PC-3 (cell line): ENCODE measurements at regions of chr21 and their contacts with region 1.

Region 1: DNA sequence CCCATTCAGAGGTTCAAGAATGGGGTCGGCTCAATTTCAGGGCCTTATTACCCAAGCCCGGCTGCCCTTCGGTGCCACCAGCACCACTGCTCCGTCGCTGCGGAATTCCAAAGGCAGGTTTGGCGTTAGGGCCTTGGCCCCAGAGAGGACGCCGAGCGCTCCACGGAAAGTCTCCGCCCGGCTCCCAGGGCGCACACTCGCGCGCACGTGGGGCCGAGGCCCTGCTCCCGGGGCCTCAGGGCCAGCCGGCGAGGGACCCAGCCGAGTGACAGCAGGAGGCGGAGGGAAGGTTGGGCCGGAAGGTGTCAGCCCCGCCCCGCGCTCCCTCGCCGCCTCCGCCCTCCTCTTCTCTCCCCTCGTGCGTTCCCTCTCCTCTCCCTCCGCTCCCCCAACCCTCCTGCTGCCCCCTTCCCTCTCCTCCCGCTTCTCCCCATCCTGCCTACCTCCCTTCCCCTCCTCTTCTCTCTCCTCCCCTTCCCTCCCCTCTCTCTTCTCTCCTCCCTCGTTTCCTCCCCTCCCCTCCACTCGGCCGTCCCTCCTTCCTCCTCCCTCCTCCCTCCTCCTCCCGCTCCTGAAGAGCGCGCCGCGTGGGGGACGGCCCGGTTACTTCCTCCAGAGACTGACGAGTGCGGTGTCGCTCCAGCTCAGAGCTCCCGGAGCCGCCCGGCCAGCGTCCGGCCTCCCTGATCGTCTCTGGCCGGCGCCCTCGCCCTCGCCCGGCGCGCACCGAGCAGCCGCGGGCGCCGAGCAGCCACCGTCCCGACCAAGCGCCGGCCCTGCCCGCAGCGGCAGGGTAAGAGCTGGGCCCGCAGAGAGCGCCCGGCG is at the start of gene ETS2:
- DNase-seq: peak; percentile 95
- ATAC-seq: peak; percentile 57
- H3K4me3 ChIP-seq: peak within 1 kb of the TSS; percentile 88
- H3K27ac ChIP-seq: peak within 1 kb of the TSS; percentile 98
- H3K4me1 ChIP-seq: peaks cover 75% of the 10 kb centered on the region
- H3K27me3 ChIP-seq: no peaks in the 10 kb centered on the region
- CTCF ChIP-seq: no peak
- total RNA-seq, gene ETS2: 127 and 146 TPM in 2 replicates

Region 2: DNA sequence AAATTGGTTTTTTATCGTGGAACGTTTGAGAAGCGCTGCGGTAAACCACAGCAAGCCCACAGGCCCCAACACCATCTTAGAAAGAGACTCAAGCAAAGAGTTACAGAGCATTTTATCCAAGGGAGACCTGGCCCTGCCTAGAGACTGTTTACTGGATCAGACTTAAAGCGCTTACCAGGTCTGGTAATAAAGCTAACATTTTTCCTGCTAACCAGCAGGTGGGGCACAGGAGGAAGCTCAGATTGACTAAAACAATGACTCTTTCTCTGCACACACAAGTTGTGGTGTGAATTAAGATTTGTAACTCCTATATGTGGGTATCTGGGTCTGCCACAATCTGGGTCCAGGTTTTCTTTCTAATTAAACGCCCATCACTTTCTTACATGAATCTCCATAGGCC is 136.4 kb before region 1 on chr21:
- CTCF ChIA-PET with region 1: no interaction called
- POLR2A ChIA-PET with region 1: no interaction called
- intact Hi-C with region 1: no loop called
- DNase-seq: peak; percentile 56
- ATAC-seq: peak; percentile 84
- H3K4me3 ChIP-seq: no peak overlapping the region
- H3K27ac ChIP-seq: no peak overlapping the region
- H3K4me1 ChIP-seq: no peaks in the 10 kb centered on the region
- H3K27me3 ChIP-seq: peaks cover 57% of the 10 kb centered on the region
- CTCF ChIP-seq: peak; percentile 75

Region 3: DNA sequence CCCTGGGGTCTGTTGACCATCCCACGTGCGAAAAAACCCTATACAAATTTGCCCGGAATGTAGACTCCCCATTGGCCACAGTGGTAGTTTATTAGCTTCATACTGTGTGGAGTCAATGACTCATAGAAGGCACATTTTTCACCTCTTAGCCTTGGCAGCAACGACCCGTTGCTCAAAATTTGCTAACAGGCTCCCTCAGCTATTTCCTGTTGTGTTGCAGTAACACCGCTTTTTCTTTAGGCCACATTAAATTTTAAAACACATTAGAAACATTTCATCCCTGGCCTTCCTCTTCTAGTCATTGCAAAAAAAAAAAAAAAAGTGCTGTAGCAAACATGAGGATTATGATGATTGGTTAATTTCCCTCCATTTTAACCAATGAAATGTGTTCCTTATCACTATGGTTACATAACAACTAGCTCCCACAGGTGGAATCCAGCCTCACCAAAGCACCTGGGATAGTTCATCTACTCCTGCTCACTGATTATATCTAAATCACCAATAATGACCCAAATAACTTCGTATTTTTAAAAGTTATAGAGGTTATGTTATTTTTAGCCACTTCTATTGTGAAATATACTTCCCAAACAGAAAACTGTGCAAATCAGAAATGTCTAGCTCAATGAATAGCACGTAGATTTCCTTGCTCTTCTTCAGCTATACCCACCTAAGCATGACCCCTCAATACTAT is 49.7 kb before region 1 on chr21:
- CTCF ChIA-PET with region 1: interaction called, 5 read pairs
- POLR2A ChIA-PET with region 1: interaction called, 3 read pairs
- intact Hi-C with region 1: loop called (anchors 1 kb)
- DNase-seq: peak; percentile 88
- ATAC-seq: peak; percentile 79
- H3K4me3 ChIP-seq: no peak overlapping the region
- H3K27ac ChIP-seq: peak overlapping the region; percentile 47
- H3K4me1 ChIP-seq: peaks cover 34% of the 10 kb centered on the region
- H3K27me3 ChIP-seq: no peaks in the 10 kb centered on the region
- CTCF ChIP-seq: no peak

Region 4: DNA sequence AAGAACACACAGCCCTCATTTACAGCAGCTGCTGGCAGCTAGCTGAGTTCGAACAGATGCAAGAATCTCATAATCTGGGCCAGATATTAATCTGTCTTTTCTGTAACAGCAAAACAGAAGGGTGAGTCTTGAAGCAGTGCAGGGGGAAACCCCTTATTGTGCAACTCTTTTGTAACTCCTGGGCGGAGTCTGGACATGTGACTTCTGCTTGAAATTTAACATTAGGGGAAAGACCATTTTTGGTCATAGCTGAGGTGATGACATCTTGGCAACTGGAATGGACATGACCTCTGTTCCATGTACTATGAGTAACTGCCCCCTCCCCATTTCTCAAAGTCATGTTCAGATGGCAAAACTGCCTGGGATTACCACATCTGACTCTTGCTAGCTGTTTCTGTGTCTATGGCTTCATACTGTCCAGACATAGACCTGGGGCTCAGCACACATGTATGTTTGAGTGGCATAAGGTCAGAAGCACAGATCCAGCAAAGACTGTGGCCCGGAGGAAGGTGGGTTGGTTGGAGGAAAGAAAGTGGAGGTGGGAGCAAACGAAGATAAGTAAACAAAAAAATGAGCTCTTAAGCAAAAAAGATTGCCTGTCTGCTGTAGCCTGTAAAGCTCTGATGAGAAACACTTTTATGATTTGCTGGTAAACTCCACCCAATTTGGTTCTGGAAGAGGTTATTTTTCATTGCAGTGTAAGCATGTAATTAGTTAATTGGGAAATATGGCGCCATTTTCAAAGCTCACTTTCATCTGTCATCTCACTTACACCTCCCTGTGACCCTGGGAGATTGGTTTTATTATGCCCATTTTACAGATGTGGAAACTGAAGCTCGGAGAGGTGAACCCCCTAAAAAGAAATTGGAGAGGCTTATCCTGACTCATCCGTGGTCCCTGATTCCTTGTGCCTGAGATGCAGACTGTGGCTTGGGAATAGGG is 26.3 kb after region 1 on chr21:
- CTCF ChIA-PET with region 1: no interaction called
- POLR2A ChIA-PET with region 1: interaction called, 20 read pairs
- intact Hi-C with region 1: no loop called
- DNase-seq: peak; percentile 81
- ATAC-seq: peak; percentile 27; the same call in 1 of the 2 replicates
- H3K4me3 ChIP-seq: no peak overlapping the region
- H3K27ac ChIP-seq: peak overlapping the region; percentile 3; the same call in 1 of the 2 replicates
- H3K4me1 ChIP-seq: peaks cover 13% of the 10 kb centered on the region
- H3K27me3 ChIP-seq: no peaks in the 10 kb centered on the region
- CTCF ChIP-seq: no peak

Region 5: GRCh38 chr21:38913120-38913892 is 107.8 kb after region 1 on chr21:
- CTCF ChIA-PET with region 1: no interaction called
- POLR2A ChIA-PET with region 1: interaction called, 4 read pairs
- intact Hi-C with region 1: loop called (anchors 2 kb)
- DNase-seq: peak; percentile 85
- ATAC-seq: peak; percentile 83
- H3K4me3 ChIP-seq: peak overlapping the region; percentile 50; the same call in 1 of the 2 replicates
- H3K27ac ChIP-seq: peak overlapping the region; percentile 66
- H3K4me1 ChIP-seq: peaks cover 57% of the 10 kb centered on the region
- H3K27me3 ChIP-seq: no peaks in the 10 kb centered on the region
- CTCF ChIP-seq: no peak

Region 6: GRCh38 chr21:39079617-39080016 is 274.1 kb after region 1 on chr21:
- CTCF ChIA-PET with region 1: no interaction called
- POLR2A ChIA-PET with region 1: no interaction called
- intact Hi-C with region 1: loop called (anchors 5 kb)
- DNase-seq: no peak
- ATAC-seq: no peak
- H3K4me3 ChIP-seq: no peak overlapping the region
- H3K27ac ChIP-seq: no peak overlapping the region
- H3K4me1 ChIP-seq: peaks cover 12% of the 10 kb centered on the region
- H3K27me3 ChIP-seq: no peaks in the 10 kb centered on the region
- CTCF ChIP-seq: no peak